Adrenal gland (tissue), 19 donors: ENCODE measurements at regions of chr5 and their contacts with region 1.

Region 1: GRCh38 chr5:149448831-149449714 is 70.0 kb upstream of the IL17B start:
- DNase-seq: peak in 2 of 7 donors; percentile 61 to 68
- H3K4me3 ChIP-seq: no peak overlapping the region
- H3K27ac ChIP-seq: peak overlapping the region in 2 of 5 donors; percentile 82 to 89
- H3K4me1 ChIP-seq: peaks cover 25 to 50% of the 10 kb centered on the region in 2 donors
- H3K27me3 ChIP-seq: no peaks in the 10 kb centered on the region
- CTCF ChIP-seq: peak; percentile 18 to 55 (median 38)
- POLR2A ChIP-seq: no peak

Region 2: DNA sequence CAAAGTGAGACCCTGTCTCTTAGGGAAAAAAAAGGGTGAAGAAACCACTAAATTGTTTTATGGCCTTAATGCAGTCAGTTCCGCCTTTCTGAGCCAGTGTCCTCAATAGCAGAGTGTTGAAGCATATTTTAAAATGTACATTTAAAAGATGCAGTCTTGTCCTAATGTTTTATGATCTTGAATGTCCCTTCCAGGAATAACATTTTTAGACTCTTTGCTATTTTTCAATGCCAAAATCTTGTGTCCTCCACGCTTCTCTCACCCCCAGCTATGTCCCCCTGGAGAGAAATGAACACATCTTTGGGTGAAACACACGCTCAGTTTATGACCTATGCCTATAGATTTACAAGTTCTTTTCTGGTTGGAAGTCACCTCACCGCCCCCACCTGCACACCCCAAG is 32.4 kb after region 1 on chr5:
- intact Hi-C with region 1: loop called in 1 of 2 experiments (anchors 5 kb)
- DNase-seq: no peak
- H3K4me3 ChIP-seq: no peak overlapping the region
- H3K27ac ChIP-seq: peak overlapping the region; percentile 45 to 81 (median 74)
- H3K4me1 ChIP-seq: peaks cover 11 to 24% of the 10 kb centered on the region in 2 donors
- H3K27me3 ChIP-seq: no peaks in the 10 kb centered on the region
- CTCF ChIP-seq: no peak
- POLR2A ChIP-seq: no peak